Left lung (tissue), 14 donors: ENCODE measurements at regions of chr6 and their contacts with region 1.

Region 1: DNA sequence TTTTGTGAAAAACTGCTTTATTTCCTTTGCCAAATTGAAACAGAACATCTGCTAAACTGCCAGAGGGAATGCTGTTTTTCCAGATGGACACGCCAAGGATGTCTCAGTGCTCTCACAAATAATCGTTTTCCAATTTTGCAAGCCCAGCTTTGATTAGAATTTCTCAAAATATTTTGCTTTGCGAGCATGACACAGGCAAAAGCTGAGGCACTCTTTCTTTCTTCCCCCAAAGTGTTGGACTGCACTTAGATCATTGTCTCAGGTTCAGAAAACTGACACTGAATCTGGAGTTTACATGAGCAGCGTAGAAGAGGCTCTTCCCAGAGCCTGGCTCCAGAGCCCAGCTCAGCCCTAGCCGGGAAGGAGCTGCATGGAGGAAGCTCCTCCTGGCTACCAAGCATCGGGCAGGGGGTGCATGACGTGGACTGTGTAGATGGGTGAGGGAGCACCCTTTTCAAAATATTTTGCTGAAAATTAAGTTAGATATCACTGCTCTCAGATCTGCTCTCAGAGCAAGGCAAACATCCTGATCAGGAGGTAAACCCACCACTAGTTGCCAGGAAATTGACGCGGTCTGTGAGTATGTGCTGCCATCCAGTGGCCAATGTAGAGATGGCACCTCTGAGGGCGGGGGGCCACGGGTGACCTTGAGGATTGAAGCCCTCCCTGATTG is 107.5 kb downstream of the SLC22A3 start:
- DNase-seq: peak in 3 of 4 donors; percentile 39 to 80 (median 74)
- ATAC-seq: peak; percentile 96
- H3K4me3 ChIP-seq: no peak overlapping the region
- H3K27ac ChIP-seq: no peak overlapping the region
- H3K4me1 ChIP-seq: peaks cover 0 to 8% of the 10 kb centered on the region in 2 donors
- H3K27me3 ChIP-seq: peaks cover 0 to 14% of the 10 kb centered on the region in 2 donors
- CTCF ChIP-seq: peak; percentile 88 to 89

Region 2: DNA sequence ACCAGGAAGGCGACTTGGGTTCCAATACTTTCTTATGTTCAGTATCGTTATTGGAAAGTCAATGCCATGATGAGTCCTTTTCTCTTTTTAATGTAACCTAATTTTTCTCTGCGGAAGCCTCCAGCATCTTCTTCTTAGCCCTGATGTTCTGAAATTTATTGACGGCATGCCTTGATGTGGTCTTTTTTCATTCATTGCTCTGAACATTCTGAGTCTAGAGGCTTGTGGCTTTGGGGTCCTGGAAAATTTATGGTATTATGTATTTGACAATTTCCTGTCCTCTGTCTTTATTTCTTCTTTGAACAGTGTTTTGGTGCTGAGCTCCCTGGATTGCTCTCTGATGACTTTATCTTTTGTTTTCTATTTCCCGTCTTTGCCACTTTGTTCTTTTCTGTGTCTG is 593.6 kb before region 1 on chr6:
- intact Hi-C with region 1: loop called in 1 of 2 experiments (anchors 10 kb)
- DNase-seq: no peak
- ATAC-seq: no peak
- H3K4me3 ChIP-seq: no peak overlapping the region
- H3K27ac ChIP-seq: no peak overlapping the region
- H3K4me1 ChIP-seq: peaks cover 0 to 6% of the 10 kb centered on the region in 2 donors
- H3K27me3 ChIP-seq: peaks cover 0 to 5% of the 10 kb centered on the region in 2 donors
- CTCF ChIP-seq: no peak

Region 3: GRCh38 chr6:160088069-160088783 is 367.5 kb before region 1 on chr6:
- intact Hi-C with region 1: loop called in 1 of 2 experiments (anchors 5 kb)
- DNase-seq: peak in 2 of 4 donors; percentile 44 to 63
- ATAC-seq: peak; percentile 70
- H3K4me3 ChIP-seq: no peak overlapping the region
- H3K27ac ChIP-seq: no peak overlapping the region
- H3K4me1 ChIP-seq: no peaks in the 10 kb centered on the region
- H3K27me3 ChIP-seq: no peaks in the 10 kb centered on the region
- CTCF ChIP-seq: peak; percentile 35 to 41

Region 4: GRCh38 chr6:160137989-160138835 is 317.5 kb before region 1 on chr6:
- intact Hi-C with region 1: loop called in 1 of 2 experiments (anchors 10 kb)
- DNase-seq: peak in 2 of 4 donors; percentile 26 to 64
- ATAC-seq: peak; percentile 84
- H3K4me3 ChIP-seq: no peak overlapping the region
- H3K27ac ChIP-seq: no peak overlapping the region
- H3K4me1 ChIP-seq: no peaks in the 10 kb centered on the region
- H3K27me3 ChIP-seq: no peaks in the 10 kb centered on the region
- CTCF ChIP-seq: peak; percentile 36 to 53